CD14-positive monocyte (primary cell): ENCODE measurements at regions of chr17 and their contacts with region 1.

Region 1: GRCh38 chr17:76481071-76481655 is 13.8 kb downstream of the AANAT start:
- DNase-seq: peak in 2 of 3 donors; percentile 57
- H3K4me3 ChIP-seq: peak overlapping the region in 1 of 3 experiments; percentile 49
- H3K4me3 Mint-ChIP-seq: peak overlapping the region; percentile 24 to 61
- H3K27ac ChIP-seq: peak overlapping the region; percentile 65 to 80
- H3K27ac Mint-ChIP-seq: peak overlapping the region; percentile 79 to 98 (median 88)
- H3K4me1 ChIP-seq: peaks cover 69 to 70% of the 10 kb centered on the region in 2 donors
- H3K4me1 Mint-ChIP-seq: peaks cover 62% of the 10 kb centered on the region
- H3K27me3 ChIP-seq: no peaks in the 10 kb centered on the region
- H3K27me3 Mint-ChIP-seq: peaks cover 0 to 6% (median 3%) of the 10 kb centered on the region in 3 donors
- CTCF ChIP-seq: no peak

Region 2: GRCh38 chr17:76252040-76252954 is 228.9 kb before region 1 on chr17:
- intact Hi-C with region 1: no loop called
- DNase-seq: peak; percentile 95 to 99 (median 96)
- H3K4me3 ChIP-seq: peak overlapping the region in 2 of 3 experiments; percentile 14 to 60
- H3K4me3 Mint-ChIP-seq: peak overlapping the region; percentile 54 to 79
- H3K27ac ChIP-seq: peak overlapping the region; percentile 94 to 97
- H3K27ac Mint-ChIP-seq: peak overlapping the region; percentile 95 to 98 (median 97)
- H3K4me1 ChIP-seq: peaks cover 50% of the 10 kb centered on the region in 2 donors
- H3K4me1 Mint-ChIP-seq: peaks cover 47% of the 10 kb centered on the region
- H3K27me3 ChIP-seq: no peaks in the 10 kb centered on the region
- H3K27me3 Mint-ChIP-seq: peaks cover 1 to 5% (median 2%) of the 10 kb centered on the region in 3 donors
- CTCF ChIP-seq: no peak

Region 3: GRCh38 chr17:76384222-76384986 is 96.8 kb before region 1 on chr17 and contains the start of gene SPHK1:
- intact Hi-C with region 1: no loop called
- DNase-seq: peak; percentile 50 to 65 (median 59)
- H3K4me3 ChIP-seq: peak within 1 kb of the TSS; percentile 75 to 86 (median 75)
- H3K4me3 Mint-ChIP-seq: peak within 1 kb of the TSS; percentile 96 to 97
- H3K27ac ChIP-seq: peak within 1 kb of the TSS; percentile 90 to 96
- H3K27ac Mint-ChIP-seq: peak within 1 kb of the TSS; percentile 87 to 97 (median 91)
- H3K4me1 ChIP-seq: peaks cover 42 to 57% of the 10 kb centered on the region in 2 donors
- H3K4me1 Mint-ChIP-seq: peaks cover 29% of the 10 kb centered on the region
- H3K27me3 ChIP-seq: peaks cover 0 to 11% of the 10 kb centered on the region in 2 donors
- H3K27me3 Mint-ChIP-seq: peaks cover 2 to 17% (median 8%) of the 10 kb centered on the region in 3 donors
- CTCF ChIP-seq: no peak
- polyA plus RNA-seq, gene SPHK1: 12.9 to 33.9 (median 19.1) TPM

Region 4: DNA sequence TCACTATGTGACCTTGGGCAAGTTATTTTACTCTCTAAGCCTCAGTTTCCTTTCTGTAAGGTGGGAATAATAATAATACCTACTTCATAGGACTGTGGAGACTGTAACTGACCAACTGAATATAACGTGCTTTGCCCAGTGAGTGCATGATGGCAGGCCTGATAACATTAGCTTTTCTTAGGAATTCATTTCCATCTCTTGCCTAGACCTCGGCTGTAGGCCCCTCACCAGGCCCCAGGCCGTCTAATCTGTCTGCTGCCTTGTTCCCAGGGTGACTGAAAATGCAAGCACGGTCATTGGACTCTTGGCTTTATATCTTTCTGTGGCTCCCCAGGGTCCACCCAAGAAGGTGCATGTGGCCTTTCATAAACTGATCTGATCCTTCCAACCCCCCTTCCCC is 21.5 kb before region 1 on chr17:
- intact Hi-C with region 1: no loop called
- DNase-seq: no peak
- H3K4me3 ChIP-seq: no peak overlapping the region
- H3K4me3 Mint-ChIP-seq: no peak overlapping the region
- H3K27ac ChIP-seq: no peak overlapping the region
- H3K27ac Mint-ChIP-seq: no peak overlapping the region
- H3K4me1 ChIP-seq: no peaks in the 10 kb centered on the region
- H3K4me1 Mint-ChIP-seq: peaks cover 5% of the 10 kb centered on the region
- H3K27me3 ChIP-seq: no peaks in the 10 kb centered on the region
- H3K27me3 Mint-ChIP-seq: peaks cover 1 to 8% (median 5%) of the 10 kb centered on the region in 3 donors
- CTCF ChIP-seq: no peak

Region 5: GRCh38 chr17:76492989-76493501 is 11.9 kb after region 1 on chr17:
- intact Hi-C with region 1: loop called in 1 of 2 experiments (anchors 1 kb)
- DNase-seq: peak; percentile 97 to 99 (median 98)
- H3K4me3 ChIP-seq: peak overlapping the region; percentile 42 to 85 (median 52)
- H3K4me3 Mint-ChIP-seq: peak overlapping the region; percentile 84 to 93
- H3K27ac ChIP-seq: peak overlapping the region; percentile 99
- H3K27ac Mint-ChIP-seq: peak overlapping the region; percentile 99 to 100 (median 100)
- H3K4me1 ChIP-seq: peaks cover 89 to 96% of the 10 kb centered on the region in 2 donors
- H3K4me1 Mint-ChIP-seq: peaks cover 91% of the 10 kb centered on the region
- H3K27me3 ChIP-seq: no peaks in the 10 kb centered on the region
- H3K27me3 Mint-ChIP-seq: peaks cover 0 to 2% (median 0%) of the 10 kb centered on the region in 3 donors
- CTCF ChIP-seq: no peak

Region 6: GRCh38 chr17:76597728-76598474 is 116.7 kb after region 1 on chr17:
- intact Hi-C with region 1: no loop called
- DNase-seq: peak; percentile 87 to 98 (median 93)
- H3K4me3 ChIP-seq: peak overlapping the region in 1 of 3 experiments; percentile 32
- H3K4me3 Mint-ChIP-seq: peak overlapping the region; percentile 50 to 59
- H3K27ac ChIP-seq: peak overlapping the region; percentile 84 to 94
- H3K27ac Mint-ChIP-seq: peak overlapping the region; percentile 89 to 98 (median 96)
- H3K4me1 ChIP-seq: peaks cover 59 to 65% of the 10 kb centered on the region in 2 donors
- H3K4me1 Mint-ChIP-seq: peaks cover 62% of the 10 kb centered on the region
- H3K27me3 ChIP-seq: no peaks in the 10 kb centered on the region
- H3K27me3 Mint-ChIP-seq: peaks cover 0 to 2% (median 0%) of the 10 kb centered on the region in 3 donors
- CTCF ChIP-seq: no peak